ENCODE measurements at regions of chr5 and their contacts with region 1.

Region 1: DNA sequence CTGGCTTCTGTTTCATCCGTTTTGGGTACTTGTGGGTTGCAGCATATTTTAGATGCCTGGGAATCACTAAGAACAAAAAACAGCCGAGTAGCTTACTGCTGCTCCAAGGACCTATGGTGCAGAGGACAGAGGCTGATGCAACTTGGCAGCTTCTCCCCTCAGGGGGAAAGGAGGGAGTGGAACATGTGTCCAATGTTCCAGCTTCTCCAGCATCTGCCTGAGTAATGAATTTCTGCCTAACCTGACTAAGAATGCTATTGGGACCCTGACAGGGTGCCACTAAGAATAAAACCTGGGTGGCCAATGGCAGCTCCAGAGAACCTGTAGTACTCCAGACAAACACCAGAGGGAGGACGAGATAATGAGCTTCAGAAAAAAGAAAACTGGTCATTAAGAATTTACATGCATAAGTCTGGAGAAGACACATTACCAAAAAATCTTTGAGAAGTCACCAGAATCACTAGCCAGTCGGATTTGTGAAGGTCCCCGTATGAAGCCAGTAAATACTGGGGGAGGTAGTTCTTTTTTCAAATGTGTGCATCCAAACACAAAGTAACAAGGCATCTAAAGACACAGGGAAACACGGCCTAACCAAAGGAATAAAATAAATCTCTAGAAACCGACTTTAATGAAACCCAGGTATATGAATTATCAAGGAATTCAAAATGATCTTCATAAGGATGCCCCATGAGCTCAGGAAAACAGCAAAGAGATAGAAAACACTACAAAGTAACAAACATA is 293.5 kb downstream of the HINT1 start:
- DNase-seq: peak; percentile 68
- H3K4me3 Mint-ChIP-seq: no peak overlapping the region
- H3K27ac Mint-ChIP-seq: no peak overlapping the region
- H3K4me1 Mint-ChIP-seq: peaks cover 13% of the 10 kb centered on the region
- H3K27me3 Mint-ChIP-seq: no peaks in the 10 kb centered on the region
- CTCF ChIP-seq: peak; percentile 90

Region 2: GRCh38 chr5:130616161-130616560 is 255.4 kb before region 1 on chr5:
- CTCF ChIA-PET with region 1: no interaction called
- POLR2A ChIA-PET with region 1: no interaction called
- intact Hi-C with region 1: no loop called
- DNase-seq: peak; percentile 19
- H3K4me3 Mint-ChIP-seq: no peak overlapping the region
- H3K27ac Mint-ChIP-seq: no peak overlapping the region
- H3K4me1 Mint-ChIP-seq: no peaks in the 10 kb centered on the region
- H3K27me3 Mint-ChIP-seq: no peaks in the 10 kb centered on the region
- CTCF ChIP-seq: no peak

Region 3: GRCh38 chr5:130885027-130885426 is 13.5 kb after region 1 on chr5:
- CTCF ChIA-PET with region 1: interaction called, 11 read pairs
- POLR2A ChIA-PET with region 1: interaction called, 3 read pairs
- intact Hi-C with region 1: no loop called
- DNase-seq: no peak
- H3K4me3 Mint-ChIP-seq: no peak overlapping the region
- H3K27ac Mint-ChIP-seq: no peak overlapping the region
- H3K4me1 Mint-ChIP-seq: no peaks in the 10 kb centered on the region
- H3K27me3 Mint-ChIP-seq: no peaks in the 10 kb centered on the region
- CTCF ChIP-seq: no peak

Region 4: DNA sequence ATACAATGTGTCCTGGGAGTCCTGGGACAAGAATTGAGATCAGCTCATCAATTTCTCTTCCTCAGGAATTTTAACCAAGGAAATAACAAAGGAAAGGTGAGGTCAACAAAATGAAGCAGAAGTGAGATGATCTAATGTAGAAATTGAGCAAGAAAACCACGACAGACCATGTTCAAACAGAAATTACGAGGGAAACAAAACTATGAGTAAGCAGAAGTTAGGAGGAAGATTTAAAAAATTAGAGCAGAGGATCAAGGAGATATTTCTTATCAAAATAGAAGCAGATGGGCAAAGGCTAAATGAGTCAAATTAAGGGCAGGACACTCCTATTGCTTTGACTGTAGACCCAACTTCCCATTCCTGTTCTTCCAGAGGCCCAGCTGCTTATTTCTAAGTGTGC is 196.1 kb after region 1 on chr5:
- CTCF ChIA-PET with region 1: interaction called, 16 read pairs
- POLR2A ChIA-PET with region 1: no interaction called
- intact Hi-C with region 1: no loop called
- DNase-seq: peak; percentile 8
- H3K4me3 Mint-ChIP-seq: no peak overlapping the region
- H3K27ac Mint-ChIP-seq: peak overlapping the region; percentile 8
- H3K4me1 Mint-ChIP-seq: peaks cover 9% of the 10 kb centered on the region
- H3K27me3 Mint-ChIP-seq: no peaks in the 10 kb centered on the region
- CTCF ChIP-seq: no peak

Region 5: DNA sequence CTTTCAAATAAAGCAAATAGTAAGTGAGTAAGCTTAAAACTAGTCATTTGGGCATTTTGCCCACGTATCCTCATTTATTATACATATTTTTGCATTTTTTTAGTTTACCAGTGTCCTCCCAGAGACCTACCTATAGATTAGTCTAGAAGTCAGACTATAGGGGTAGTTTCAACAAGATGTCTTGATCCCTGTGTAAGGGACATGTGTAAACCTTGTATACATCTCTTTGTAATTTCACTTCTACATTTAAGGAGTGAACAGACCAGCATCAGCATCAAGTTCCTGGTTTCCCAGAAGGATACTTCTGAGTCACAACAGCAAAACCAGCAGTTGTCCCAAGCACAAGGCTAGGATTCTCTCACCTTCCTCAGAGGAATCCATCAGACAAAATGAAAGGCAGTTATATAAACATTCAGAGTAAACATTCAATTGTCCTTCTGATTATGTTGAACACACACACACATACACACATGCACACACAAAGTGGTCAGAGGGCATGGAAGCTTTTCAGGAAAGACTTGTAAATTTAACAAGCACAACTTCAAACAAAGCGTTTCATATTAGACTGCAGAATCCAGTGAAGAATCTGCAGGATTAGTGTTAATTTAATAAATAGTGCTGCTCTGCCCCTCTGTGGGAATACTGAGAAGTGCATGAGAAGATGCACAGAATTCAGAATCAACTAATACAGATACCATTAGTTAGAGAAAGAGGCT is 238.2 kb after region 1 on chr5:
- CTCF ChIA-PET with region 1: interaction called, 33 read pairs
- POLR2A ChIA-PET with region 1: interaction called, 5 read pairs
- intact Hi-C with region 1: loop called (anchors 1 kb)
- DNase-seq: peak; percentile 74
- H3K4me3 Mint-ChIP-seq: no peak overlapping the region
- H3K27ac Mint-ChIP-seq: no peak overlapping the region
- H3K4me1 Mint-ChIP-seq: peaks cover 5% of the 10 kb centered on the region
- H3K27me3 Mint-ChIP-seq: no peaks in the 10 kb centered on the region
- CTCF ChIP-seq: peak; percentile 89

Region 6: DNA sequence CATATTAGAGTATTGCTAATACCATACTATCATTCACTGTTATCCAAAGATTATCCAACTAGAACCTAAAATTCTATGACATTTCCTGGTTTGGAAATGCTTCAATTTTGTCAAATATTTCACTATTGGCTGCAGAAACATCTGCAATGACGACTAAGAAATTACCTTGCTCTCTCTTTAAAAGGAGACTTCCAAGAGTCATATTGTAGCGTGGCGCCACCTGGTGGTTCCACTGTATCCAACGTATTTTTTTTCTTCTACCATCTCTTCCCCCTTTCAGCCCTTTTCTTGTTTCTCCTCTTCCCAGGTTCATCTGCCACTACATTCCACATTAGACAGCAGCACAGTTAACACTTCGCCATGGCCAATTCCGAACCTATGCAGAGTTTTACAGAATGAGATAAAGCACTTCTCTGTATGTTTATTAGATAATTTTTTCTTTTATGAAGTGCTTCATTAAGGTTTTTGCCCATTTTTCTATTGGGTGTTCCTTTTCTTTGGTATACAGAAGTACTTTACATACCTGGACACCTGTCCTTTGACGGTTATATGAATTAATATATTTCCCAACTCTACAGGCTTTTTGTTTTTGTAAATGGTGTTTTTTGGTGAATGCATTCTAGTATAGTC is 545.8 kb after region 1 on chr5:
- CTCF ChIA-PET with region 1: interaction called, 6 read pairs
- POLR2A ChIA-PET with region 1: no interaction called
- intact Hi-C with region 1: loop called (anchors 1 kb)
- DNase-seq: peak; percentile 85
- H3K4me3 Mint-ChIP-seq: no peak overlapping the region
- H3K27ac Mint-ChIP-seq: no peak overlapping the region
- H3K4me1 Mint-ChIP-seq: peaks cover 5% of the 10 kb centered on the region
- H3K27me3 Mint-ChIP-seq: no peaks in the 10 kb centered on the region
- CTCF ChIP-seq: peak; percentile 89